Dorsolateral prefrontal cortex (tissue), 120 donors: ENCODE measurements at regions of chr16 and their contacts with region 1.

Region 1: GRCh38 chr16:53054670-53055485 is at the start of gene CHD9:
- DNase-seq: peak; percentile 60 to 87 (median 74)
- H3K4me3 ChIP-seq: peak within 1 kb of the TSS; percentile 46 to 94 (median 80)
- H3K27ac ChIP-seq: peak within 1 kb of the TSS in 58 of 59 donors; percentile 15 to 94 (median 82)
- H3K27me3 ChIP-seq: no peaks in the 10 kb centered on the region
- CTCF ChIP-seq: peak; percentile 87 to 100 (median 99)
- total RNA-seq, gene CHD9: 104 to 179 (median 138) TPM

Region 2: GRCh38 chr16:52786091-52786490 is 268.8 kb before region 1 on chr16:
- intact Hi-C with region 1: no loop called
- DNase-seq: no peak
- H3K4me3 ChIP-seq: no peak overlapping the region
- H3K27ac ChIP-seq: no peak overlapping the region
- H3K27me3 ChIP-seq: peaks cover 0 to 12% (median 0%) of the 10 kb centered on the region in 45 donors
- CTCF ChIP-seq: no peak

Region 3: DNA sequence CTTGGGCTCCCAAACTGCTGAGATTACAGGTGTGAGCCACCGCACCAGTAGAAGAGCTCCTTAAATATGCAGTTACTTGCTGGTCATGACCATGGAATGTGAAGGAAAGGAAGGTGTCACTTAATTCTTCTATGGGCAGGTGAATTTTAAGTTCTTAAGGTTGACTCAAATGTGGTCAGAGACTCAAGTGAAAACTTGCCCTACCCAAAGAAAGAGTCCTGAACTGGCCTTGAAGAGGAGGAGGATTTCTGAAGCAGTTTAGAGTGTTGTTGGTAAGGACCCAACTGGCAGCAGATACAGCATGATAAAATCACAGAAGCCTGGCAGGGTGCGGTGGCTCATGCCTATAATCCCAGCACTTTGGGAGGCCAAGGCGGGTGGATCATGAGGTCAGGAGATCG is 29.3 kb after region 1 on chr16:
- intact Hi-C with region 1: no loop called
- DNase-seq: no peak
- H3K4me3 ChIP-seq: no peak overlapping the region
- H3K27ac ChIP-seq: peak overlapping the region in 5 of 59 donors; percentile 58 to 65 (median 61)
- H3K27me3 ChIP-seq: no peaks in the 10 kb centered on the region
- CTCF ChIP-seq: no peak

Region 4: GRCh38 chr16:53099318-53100130 is 44.6 kb after region 1 on chr16:
- intact Hi-C with region 1: loop called (anchors 2 to 5 kb)
- DNase-seq: peak; percentile 70 to 94 (median 89)
- H3K4me3 ChIP-seq: peak overlapping the region; percentile 22 to 71 (median 51)
- H3K27ac ChIP-seq: peak overlapping the region; percentile 68 to 98 (median 93)
- H3K27me3 ChIP-seq: no peaks in the 10 kb centered on the region
- CTCF ChIP-seq: peak in 16 of 56 donors; percentile 0 to 38 (median 20)

Region 5: DNA sequence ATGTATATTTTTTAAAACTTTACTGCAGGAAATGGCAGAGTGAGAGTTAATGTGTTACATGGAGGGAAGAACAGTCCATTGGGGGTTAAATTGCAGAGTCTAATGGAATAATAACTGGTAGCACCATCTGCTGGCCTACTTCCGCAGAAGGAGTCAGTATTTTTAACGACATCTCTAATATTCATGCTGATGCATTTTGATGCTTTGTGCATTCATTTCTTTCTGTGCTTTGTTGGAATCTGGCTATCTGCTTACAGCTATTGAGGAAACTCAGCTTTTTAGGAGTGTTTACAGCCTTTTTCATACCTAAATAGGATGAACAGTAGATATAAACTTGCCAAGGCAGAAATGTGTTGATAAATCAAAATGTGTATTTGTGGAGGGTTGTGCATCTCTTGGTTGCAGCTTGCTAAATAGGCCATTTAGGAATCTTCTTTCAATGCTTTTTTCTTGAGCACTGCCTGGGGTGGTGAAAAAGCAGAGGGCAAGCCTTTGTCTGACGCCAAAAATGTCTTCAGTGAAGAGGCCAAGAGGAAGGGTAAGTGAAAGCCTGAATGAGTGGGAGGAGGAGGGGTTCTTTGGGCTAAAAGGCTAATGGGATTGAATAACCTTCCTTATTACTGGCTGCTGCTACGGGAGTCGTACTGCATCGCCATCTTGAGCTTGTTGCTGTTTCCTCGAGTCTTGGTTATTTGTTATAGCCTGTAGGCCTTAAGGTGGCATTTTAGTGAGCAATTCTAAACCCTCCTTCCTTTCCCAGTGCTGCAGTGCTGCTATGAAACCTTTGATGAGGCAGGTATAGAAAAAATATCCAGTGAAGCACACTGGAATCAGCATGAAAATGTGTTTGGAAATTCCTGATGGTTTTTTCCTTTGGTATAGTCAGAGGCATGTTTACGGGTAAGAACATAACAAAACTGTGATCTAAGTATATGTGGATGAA is 153.2 kb after region 1 on chr16:
- intact Hi-C with region 1: loop called (anchors 2 to 5 kb)
- DNase-seq: peak in 7 of 10 donors; percentile 24 to 71 (median 53)
- H3K4me3 ChIP-seq: peak overlapping the region; percentile 42 to 81 (median 65)
- H3K27ac ChIP-seq: peak overlapping the region; percentile 67 to 97 (median 91)
- H3K27me3 ChIP-seq: no peaks in the 10 kb centered on the region
- CTCF ChIP-seq: peak in 55 of 56 donors; percentile 31 to 73 (median 58)

Region 6: DNA sequence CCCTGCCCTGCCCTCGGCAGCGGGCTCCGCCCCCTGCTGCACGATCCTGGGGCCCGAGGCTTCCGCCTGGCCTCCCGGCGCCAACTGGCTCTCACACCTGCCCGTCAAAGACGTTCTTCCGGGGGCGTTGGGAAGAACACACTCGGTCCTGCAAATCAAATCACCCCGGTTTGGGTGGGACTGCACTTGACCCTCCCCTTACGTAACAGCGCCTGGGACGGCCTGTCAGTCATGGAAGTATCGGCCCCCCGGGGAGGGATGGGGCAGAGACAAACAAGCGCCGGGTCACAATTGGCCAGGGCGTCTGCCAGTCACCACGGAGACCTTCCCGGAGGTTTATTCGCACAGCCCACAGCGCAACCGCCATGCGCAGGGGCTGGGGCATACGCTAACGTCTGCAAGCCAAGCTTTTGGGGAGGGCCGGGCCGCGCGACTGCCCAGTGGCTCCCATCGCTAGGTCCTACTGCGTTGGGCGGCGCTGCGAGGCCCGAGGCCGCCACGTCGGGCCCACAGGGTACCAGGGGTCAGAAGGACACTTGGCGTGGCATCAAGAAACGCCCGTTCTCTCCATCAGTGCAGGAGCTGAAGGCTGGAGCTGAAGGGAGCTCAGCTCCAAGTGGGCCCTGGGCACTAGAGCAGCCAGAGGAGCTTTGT is 448.5 kb after region 1 on chr16:
- intact Hi-C with region 1: loop called in 1 of 2 experiments (anchors 10 kb)
- DNase-seq: peak; percentile 100
- H3K4me3 ChIP-seq: peak overlapping the region; percentile 71 to 98 (median 91)
- H3K27ac ChIP-seq: peak overlapping the region; percentile 86 to 100 (median 98)
- H3K27me3 ChIP-seq: no peaks in the 10 kb centered on the region
- CTCF ChIP-seq: peak in 13 of 56 donors; percentile 3 to 35 (median 14)